ENCODE measurements at regions of chr6 and their contacts with region 1.

Region 1: GRCh38 chr6:90080876-90081481 is 186.7 kb downstream of the GJA10 start:
- DNase-seq: peak; percentile 76
- H3K4me3 Mint-ChIP-seq: peak overlapping the region; percentile 88
- H3K27ac Mint-ChIP-seq: peak overlapping the region; percentile 95
- H3K4me1 Mint-ChIP-seq: peaks cover 96% of the 10 kb centered on the region
- H3K27me3 Mint-ChIP-seq: no peaks in the 10 kb centered on the region

Region 2: DNA sequence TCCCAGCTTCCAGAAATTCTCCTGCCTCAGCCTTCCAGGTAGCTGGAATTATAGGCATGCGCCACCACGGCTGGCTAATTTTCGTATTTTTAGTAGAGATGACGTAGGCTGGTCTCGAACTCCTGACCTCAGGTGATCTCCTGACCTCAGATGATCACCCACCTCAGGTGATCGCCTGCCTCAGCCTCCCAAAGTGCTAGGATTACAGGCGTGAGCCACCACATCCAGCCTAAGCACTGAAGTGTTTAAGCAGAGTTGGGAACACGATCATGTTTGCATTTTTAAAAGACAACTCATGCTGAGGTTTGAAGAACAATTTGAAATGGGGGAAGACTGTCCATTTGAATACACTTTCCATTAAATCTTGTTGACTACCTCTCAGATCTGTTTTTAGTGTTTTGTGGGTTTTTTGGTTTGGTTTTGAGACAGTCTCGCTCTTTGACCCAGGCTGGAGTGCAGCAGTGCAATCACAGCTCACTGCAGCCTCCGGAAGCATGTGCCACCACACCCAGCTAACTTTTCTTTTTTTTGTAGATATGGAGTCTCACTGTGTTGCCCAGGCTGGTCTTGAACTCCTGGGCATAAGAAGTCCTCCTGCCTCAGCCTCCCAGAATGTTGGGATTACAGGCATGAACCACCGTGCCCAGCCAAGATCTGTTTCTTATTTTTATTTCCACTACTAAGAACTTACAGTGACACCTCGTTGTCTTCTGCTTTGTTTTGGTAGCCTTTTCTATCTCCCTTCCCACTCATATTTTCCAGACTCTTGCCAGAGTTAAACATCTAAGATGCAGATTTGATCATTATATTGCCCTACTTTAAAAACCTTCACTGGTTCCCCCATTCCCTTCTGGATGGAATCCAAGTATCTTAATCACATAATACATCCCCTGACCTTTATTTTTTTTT is 245.8 kb before region 1 on chr6:
- intact Hi-C with region 1: loop called (anchors 1 kb)
- DNase-seq: peak; percentile 22
- H3K4me3 Mint-ChIP-seq: peak overlapping the region; percentile 15
- H3K27ac Mint-ChIP-seq: peak overlapping the region; percentile 94
- H3K4me1 Mint-ChIP-seq: peaks cover 53% of the 10 kb centered on the region
- H3K27me3 Mint-ChIP-seq: no peaks in the 10 kb centered on the region

Region 3: GRCh38 chr6:90025523-90026061 is 55.4 kb before region 1 on chr6:
- intact Hi-C with region 1: loop called (anchors 1 kb)
- DNase-seq: no peak
- H3K4me3 Mint-ChIP-seq: peak overlapping the region; percentile 69
- H3K27ac Mint-ChIP-seq: peak overlapping the region; percentile 95
- H3K4me1 Mint-ChIP-seq: peaks cover 77% of the 10 kb centered on the region
- H3K27me3 Mint-ChIP-seq: no peaks in the 10 kb centered on the region

Region 4: DNA sequence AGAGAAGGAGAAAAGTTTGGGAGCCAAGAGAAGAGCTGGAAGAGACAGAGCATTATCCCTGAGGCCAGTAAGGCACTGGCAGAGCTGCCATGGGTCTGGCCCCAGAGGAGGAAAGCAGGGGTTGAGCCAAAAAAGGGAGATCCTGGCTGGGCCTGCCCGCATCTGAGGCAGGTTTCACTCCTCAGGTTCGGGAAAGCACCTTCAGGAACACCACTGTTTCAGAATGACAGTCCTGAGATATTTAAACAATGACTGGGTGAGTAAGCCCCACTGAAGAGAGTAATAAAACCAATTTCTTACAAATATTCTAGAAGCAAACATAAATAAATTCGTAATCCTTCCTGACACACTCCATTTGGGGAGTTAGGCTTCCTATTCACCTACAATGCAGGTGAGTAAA is 63.4 kb after region 1 on chr6:
- intact Hi-C with region 1: loop called (anchors 1 kb)
- DNase-seq: no peak
- H3K4me3 Mint-ChIP-seq: peak overlapping the region; percentile 45
- H3K27ac Mint-ChIP-seq: peak overlapping the region; percentile 78
- H3K4me1 Mint-ChIP-seq: peaks cover 66% of the 10 kb centered on the region
- H3K27me3 Mint-ChIP-seq: peaks cover 15% of the 10 kb centered on the region

Region 5: DNA sequence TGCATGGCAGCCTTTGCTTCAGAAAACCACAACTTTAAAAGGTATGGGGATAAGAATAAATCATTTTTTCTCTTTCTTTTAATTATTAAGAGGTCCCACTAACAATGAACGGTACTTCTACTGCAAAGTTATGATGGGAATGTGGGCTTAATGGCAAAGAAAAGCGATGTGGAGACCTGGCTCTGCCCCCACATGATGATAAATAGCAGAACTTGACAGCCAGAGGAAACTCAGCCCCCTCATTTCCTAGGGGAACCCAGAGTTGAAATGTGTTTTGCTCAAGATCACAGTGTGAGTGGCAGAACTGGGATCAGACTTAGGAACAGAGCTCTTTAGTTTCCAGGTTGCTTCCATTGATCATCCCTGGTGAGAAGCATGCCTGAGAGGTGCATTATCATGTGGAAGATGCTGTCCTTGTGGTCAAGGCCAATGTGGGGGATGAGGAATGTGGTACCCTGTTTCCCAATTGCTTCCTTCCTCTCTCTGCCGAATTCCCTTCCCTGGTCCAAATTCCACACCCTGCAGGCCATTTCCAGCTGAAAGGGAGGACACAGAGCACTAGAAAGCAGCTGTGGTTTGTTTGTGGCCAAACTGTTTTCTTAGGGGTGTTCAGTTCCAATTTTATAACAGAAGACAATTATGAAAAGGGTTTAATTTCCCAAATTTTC is 149.7 kb after region 1 on chr6:
- intact Hi-C with region 1: loop called (anchors 1 kb)
- DNase-seq: no peak
- H3K4me3 Mint-ChIP-seq: peak overlapping the region; percentile 10
- H3K27ac Mint-ChIP-seq: peak overlapping the region; percentile 31
- H3K4me1 Mint-ChIP-seq: peaks cover 89% of the 10 kb centered on the region
- H3K27me3 Mint-ChIP-seq: no peaks in the 10 kb centered on the region

Region 6: GRCh38 chr6:90393232-90393884 is 312.4 kb after region 1 on chr6:
- intact Hi-C with region 1: loop called (anchors 1 kb)
- DNase-seq: peak; percentile 65
- H3K4me3 Mint-ChIP-seq: no peak overlapping the region
- H3K27ac Mint-ChIP-seq: peak overlapping the region; percentile 32
- H3K4me1 Mint-ChIP-seq: peaks cover 68% of the 10 kb centered on the region
- H3K27me3 Mint-ChIP-seq: no peaks in the 10 kb centered on the region

Region 7: GRCh38 chr6:90467546-90467945 is 386.6 kb after region 1 on chr6:
- intact Hi-C with region 1: no loop called
- DNase-seq: no peak
- H3K4me3 Mint-ChIP-seq: no peak overlapping the region
- H3K27ac Mint-ChIP-seq: peak overlapping the region; percentile 92
- H3K4me1 Mint-ChIP-seq: peaks cover 98% of the 10 kb centered on the region
- H3K27me3 Mint-ChIP-seq: no peaks in the 10 kb centered on the region

Region 8: DNA sequence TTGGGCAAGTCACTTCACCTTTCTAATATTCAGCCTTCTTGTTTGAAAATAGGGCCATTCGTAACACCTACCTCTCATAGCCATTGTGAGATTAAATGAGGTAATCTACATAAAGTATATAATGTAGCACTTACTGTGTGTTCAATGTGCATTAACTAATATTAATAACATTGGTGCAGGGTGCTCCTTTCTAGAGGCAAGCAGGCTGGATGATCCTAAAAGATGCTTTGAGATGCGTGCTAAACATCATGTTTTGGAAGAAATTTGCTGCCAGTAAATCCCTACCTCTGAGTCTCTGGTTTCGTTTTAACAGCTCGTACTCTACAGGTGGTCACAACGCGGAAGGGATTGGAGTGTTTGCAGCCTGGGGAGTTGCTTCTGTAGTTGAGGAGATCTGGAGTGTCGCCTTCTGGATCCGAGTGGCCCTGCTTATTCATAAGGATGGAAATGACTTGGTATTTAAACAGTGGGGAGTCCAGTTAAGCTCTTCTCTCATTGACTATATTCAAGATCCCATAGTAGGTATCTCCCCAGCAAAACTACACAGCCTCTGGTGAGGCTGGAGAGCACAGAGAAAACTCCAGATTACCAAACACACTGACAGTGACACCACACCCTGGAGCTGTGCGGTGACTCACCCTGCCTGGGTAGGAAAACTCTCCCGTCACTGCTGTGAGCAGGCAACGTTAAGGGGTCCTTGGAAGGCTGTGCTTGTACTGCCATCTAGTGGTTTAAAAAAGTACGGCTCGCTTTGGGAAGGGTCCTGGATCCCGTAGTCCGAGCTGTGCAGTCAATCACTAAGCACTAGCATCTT is 398.0 kb after region 1 on chr6:
- intact Hi-C with region 1: loop called (anchors 1 kb)
- DNase-seq: peak; percentile 76
- H3K4me3 Mint-ChIP-seq: peak overlapping the region; percentile 3
- H3K27ac Mint-ChIP-seq: peak overlapping the region; percentile 85
- H3K4me1 Mint-ChIP-seq: peaks cover 56% of the 10 kb centered on the region
- H3K27me3 Mint-ChIP-seq: peaks cover 2% of the 10 kb centered on the region

Region 9: GRCh38 chr6:90739340-90739739 is 658.4 kb after region 1 on chr6:
- intact Hi-C with region 1: no loop called
- DNase-seq: no peak
- H3K4me3 Mint-ChIP-seq: no peak overlapping the region
- H3K27ac Mint-ChIP-seq: no peak overlapping the region
- H3K4me1 Mint-ChIP-seq: no peaks in the 10 kb centered on the region
- H3K27me3 Mint-ChIP-seq: peaks cover 8% of the 10 kb centered on the region